HCT116 (cell line): ENCODE measurements at regions of chr10 and their contacts with region 1.

Region 1: GRCh38 chr10:77605466-77605865 is 32.1 kb downstream of the KCNMA1 start:
- DNase-seq: no peak
- ATAC-seq: peak; percentile 63
- H3K4me3 ChIP-seq: no peak overlapping the region
- H3K27ac ChIP-seq: no peak overlapping the region
- H3K4me1 ChIP-seq: peaks cover 0 to 29% of the 10 kb centered on the region in 2 experiments; a peak in 2 of 4 replicates
- H3K27me3 ChIP-seq: no peaks in the 10 kb centered on the region
- CTCF ChIP-seq: peak in 2 of 3 experiments; percentile 17 to 65; a peak in 5 of 6 replicates
- POLR2A ChIP-seq: no peak
- RAD21 ChIP-seq: peak; percentile 88

Region 2: DNA sequence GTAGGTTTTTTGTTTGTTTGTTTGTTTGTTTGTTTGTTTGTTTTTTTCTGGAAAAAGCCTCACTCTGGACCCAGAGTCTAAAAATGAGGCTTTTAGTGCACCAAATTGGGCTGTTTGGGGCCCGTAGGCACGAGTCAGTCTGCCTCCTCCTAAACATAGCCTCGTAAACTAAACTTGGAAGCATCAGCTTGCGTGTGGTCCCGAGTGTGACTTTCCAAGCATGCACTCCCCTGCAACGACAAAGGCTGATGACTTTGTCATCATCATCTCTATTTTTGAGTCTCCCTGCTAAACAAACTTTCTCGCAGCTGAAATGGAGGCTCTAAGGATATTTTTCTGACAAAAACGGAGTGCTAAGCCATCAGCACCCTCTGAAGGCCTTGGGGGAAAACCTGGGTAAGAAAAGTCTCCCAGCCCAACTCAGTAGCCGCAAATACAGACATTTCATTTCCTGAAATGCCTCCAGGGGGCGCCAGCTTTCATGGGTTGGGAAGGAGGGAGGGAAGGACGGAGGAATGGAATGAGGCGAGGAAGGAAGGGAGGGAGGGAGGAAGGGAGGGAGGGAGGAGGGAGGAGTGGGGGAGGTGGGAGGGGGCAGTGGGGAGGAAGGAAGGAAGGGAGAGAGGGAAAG is 213.7 kb before region 1 on chr10:
- CTCF ChIA-PET with region 1: interaction called, 4 read pairs
- POLR2A ChIA-PET with region 1: no interaction called
- RAD21 ChIA-PET with region 1: interaction called in 1 of 2 experiments, 3 read pairs
- intact Hi-C with region 1: loop called (anchors 1 kb)
- DNase-seq: peak; percentile 74
- ATAC-seq: peak; percentile 88
- H3K4me3 ChIP-seq: no peak overlapping the region
- H3K27ac ChIP-seq: no peak overlapping the region
- H3K4me1 ChIP-seq: peaks cover 6 to 23% of the 10 kb centered on the region in 2 experiments
- H3K27me3 ChIP-seq: peaks cover 12% of the 10 kb centered on the region; the same call in 1 of the 2 replicates
- CTCF ChIP-seq: peak; percentile 70 to 84 (median 82); a peak in 5 of 6 replicates
- POLR2A ChIP-seq: no peak
- RAD21 ChIP-seq: peak; percentile 89

Region 3: GRCh38 chr10:77494327-77494726 is 111.1 kb before region 1 on chr10:
- CTCF ChIA-PET with region 1: interaction called, 15 read pairs
- POLR2A ChIA-PET with region 1: no interaction called
- RAD21 ChIA-PET with region 1: no interaction called
- intact Hi-C with region 1: loop called (anchors 1 kb)
- DNase-seq: peak; percentile 32
- ATAC-seq: peak; percentile 82
- H3K4me3 ChIP-seq: no peak overlapping the region
- H3K27ac ChIP-seq: no peak overlapping the region
- H3K4me1 ChIP-seq: no peaks in the 10 kb centered on the region
- H3K27me3 ChIP-seq: no peaks in the 10 kb centered on the region
- CTCF ChIP-seq: peak; percentile 42 to 71 (median 65)
- POLR2A ChIP-seq: no peak
- RAD21 ChIP-seq: peak; percentile 88

Region 4: GRCh38 chr10:77564731-77565589 is 40.5 kb before region 1 on chr10:
- CTCF ChIA-PET with region 1: no interaction called
- POLR2A ChIA-PET with region 1: no interaction called
- RAD21 ChIA-PET with region 1: no interaction called
- intact Hi-C with region 1: loop called (anchors 5 kb)
- DNase-seq: no peak
- ATAC-seq: peak; percentile 76
- H3K4me3 ChIP-seq: peak overlapping the region in 1 of 2 experiments; percentile 37; a peak in 2 of 4 replicates
- H3K27ac ChIP-seq: no peak overlapping the region
- H3K4me1 ChIP-seq: peaks cover 16 to 33% of the 10 kb centered on the region in 2 experiments
- H3K27me3 ChIP-seq: no peaks in the 10 kb centered on the region
- CTCF ChIP-seq: no peak
- POLR2A ChIP-seq: no peak
- RAD21 ChIP-seq: no peak